ENCODE measurements at regions of chr12 and their contacts with region 1.

Region 1: GRCh38 chr12:18676996-18677588 is 60.7 kb downstream of the PLCZ1 start:
- DNase-seq: no peak
- H3K4me3 ChIP-seq: no peak overlapping the region
- H3K27ac ChIP-seq: no peak overlapping the region
- H3K4me1 ChIP-seq: no peaks in the 10 kb centered on the region
- H3K27me3 ChIP-seq: no peaks in the 10 kb centered on the region
- CTCF ChIP-seq: no peak

Region 2: GRCh38 chr12:18700271-18700670 is 23.2 kb after region 1 on chr12:
- CTCF ChIA-PET with region 1: no interaction called
- POLR2A ChIA-PET with region 1: no interaction called
- intact Hi-C with region 1: loop called (anchors 1 kb)
- DNase-seq: no peak
- H3K4me3 ChIP-seq: no peak overlapping the region
- H3K27ac ChIP-seq: no peak overlapping the region
- H3K4me1 ChIP-seq: no peaks in the 10 kb centered on the region
- H3K27me3 ChIP-seq: no peaks in the 10 kb centered on the region
- CTCF ChIP-seq: no peak

Region 3: GRCh38 chr12:19273482-19274330 is 596.6 kb after region 1 on chr12:
- CTCF ChIA-PET with region 1: no interaction called
- POLR2A ChIA-PET with region 1: no interaction called
- intact Hi-C with region 1: no loop called
- DNase-seq: peak; percentile 96
- H3K4me3 ChIP-seq: no peak overlapping the region
- H3K27ac ChIP-seq: no peak overlapping the region
- H3K4me1 ChIP-seq: peaks cover 48% of the 10 kb centered on the region
- H3K27me3 ChIP-seq: no peaks in the 10 kb centered on the region
- CTCF ChIP-seq: no peak